Activated naive CD4-positive, alpha-beta T cell treated with anti-CD3 and anti-CD28 coated beads for 36 hours (primary cell): ENCODE measurements at regions of chr6 and their contacts with region 1.

Region 1: DNA sequence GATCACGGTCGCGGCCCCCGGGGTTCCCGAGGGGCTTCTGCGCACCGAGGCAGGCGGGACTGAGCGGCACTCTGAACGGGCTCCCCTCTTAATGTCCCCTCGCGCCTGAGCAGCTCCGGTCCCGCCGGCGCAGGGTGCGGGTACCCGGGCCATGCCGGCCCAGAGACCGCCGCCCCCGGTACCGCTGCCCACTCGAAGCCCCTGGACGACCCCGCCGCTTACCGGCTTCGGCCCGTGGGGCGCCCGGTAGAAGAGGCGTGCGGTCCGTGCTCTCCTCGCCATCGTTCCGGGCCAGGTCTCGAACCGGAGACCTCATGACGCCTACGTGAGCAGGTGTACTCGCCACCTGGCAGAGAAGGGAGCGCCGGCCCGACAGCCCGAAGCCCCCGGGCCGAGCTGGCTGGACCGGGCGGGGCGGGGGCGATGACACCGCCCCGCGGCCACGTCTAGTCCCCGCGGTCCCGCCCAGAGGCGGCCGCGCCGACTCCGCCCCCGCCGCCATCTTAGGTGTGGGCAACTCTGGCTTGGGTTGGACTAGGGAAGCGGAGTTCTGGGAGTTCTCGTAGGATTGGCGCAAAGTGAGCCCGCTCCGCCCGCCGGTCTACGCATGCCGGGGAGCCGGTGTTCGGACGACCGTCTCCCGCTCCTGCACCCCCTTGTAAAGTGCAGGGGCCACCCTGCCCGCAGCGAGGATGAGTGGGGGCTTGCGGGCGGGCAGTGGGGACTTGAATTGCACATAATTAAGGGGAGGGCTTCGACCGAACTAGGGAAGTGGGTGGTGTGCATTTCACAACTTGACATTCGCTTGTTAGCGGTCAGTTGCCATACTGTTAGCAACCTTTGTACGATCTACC is at the start of gene SLC17A5:
- DNase-seq: peak; percentile 92
- H3K4me3 Mint-ChIP-seq: peak within 1 kb of the TSS; percentile 97
- H3K27ac Mint-ChIP-seq: peak within 1 kb of the TSS; percentile 86
- H3K4me1 Mint-ChIP-seq: peaks cover 18% of the 10 kb centered on the region
- H3K27me3 Mint-ChIP-seq: no peaks in the 10 kb centered on the region
- total RNA-seq, gene SLC17A5: 1.7 to 2.0 TPM

Region 2: GRCh38 chr6:72048080-72048479 is 1605.7 kb before region 1 on chr6:
- CTCF ChIA-PET with region 1: no interaction called
- intact Hi-C with region 1: no loop called
- DNase-seq: no peak
- H3K4me3 Mint-ChIP-seq: no peak overlapping the region
- H3K27ac Mint-ChIP-seq: no peak overlapping the region
- H3K4me1 Mint-ChIP-seq: no peaks in the 10 kb centered on the region
- H3K27me3 Mint-ChIP-seq: no peaks in the 10 kb centered on the region

Region 3: DNA sequence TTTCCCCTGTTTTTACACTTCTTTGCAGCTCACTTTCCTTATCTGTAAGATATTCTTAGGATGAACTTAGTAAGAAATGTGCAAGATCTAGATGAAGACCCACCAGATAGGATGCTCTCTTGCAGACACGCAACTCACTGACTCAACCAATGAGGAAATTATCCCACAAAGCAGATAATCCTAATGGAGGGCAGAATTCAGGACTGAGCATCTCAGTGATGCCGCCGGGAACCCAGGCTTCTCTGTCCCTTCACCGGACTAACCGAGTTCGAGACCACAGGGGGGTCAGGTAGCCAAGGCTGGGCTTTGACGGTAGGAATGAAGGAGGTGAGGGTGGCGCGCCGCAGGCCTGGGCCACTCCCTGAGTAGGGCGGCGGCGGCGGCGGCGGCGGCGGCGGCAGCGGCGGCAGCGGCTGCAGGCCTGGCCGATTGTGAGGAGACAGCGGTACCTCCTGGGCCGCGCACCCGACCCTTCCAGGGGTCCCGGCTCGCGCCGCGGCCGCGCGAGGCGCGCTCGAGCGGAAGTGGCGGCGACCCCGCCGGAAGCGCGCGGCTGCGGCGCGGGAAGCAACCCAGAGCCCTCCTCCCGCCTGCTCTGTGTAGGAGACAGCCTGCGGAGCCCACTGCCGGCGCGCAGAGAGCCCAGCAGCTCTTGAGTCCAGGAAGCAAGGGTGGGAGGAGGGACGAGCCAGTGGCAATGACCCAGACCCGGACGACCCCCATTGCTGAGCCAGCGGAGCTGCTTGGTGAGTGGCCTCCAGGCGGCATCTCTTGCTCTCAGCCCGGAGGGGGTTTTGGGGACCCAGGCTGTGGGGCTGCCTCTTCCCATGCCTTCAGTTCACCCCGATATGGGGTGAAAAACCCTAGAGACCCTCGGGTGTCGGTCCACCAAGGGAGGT is 390.9 kb before region 1 on chr6 and contains the start of gene KHDC1:
- CTCF ChIA-PET with region 1: no interaction called
- intact Hi-C with region 1: loop called (anchors 1 kb)
- DNase-seq: peak; percentile 65
- H3K4me3 Mint-ChIP-seq: peak within 1 kb of the TSS; percentile 80
- H3K27ac Mint-ChIP-seq: peak within 1 kb of the TSS; percentile 56
- H3K4me1 Mint-ChIP-seq: peaks cover 30% of the 10 kb centered on the region
- H3K27me3 Mint-ChIP-seq: no peaks in the 10 kb centered on the region
- total RNA-seq, gene KHDC1: 1.1 to 1.6 TPM

Region 4: DNA sequence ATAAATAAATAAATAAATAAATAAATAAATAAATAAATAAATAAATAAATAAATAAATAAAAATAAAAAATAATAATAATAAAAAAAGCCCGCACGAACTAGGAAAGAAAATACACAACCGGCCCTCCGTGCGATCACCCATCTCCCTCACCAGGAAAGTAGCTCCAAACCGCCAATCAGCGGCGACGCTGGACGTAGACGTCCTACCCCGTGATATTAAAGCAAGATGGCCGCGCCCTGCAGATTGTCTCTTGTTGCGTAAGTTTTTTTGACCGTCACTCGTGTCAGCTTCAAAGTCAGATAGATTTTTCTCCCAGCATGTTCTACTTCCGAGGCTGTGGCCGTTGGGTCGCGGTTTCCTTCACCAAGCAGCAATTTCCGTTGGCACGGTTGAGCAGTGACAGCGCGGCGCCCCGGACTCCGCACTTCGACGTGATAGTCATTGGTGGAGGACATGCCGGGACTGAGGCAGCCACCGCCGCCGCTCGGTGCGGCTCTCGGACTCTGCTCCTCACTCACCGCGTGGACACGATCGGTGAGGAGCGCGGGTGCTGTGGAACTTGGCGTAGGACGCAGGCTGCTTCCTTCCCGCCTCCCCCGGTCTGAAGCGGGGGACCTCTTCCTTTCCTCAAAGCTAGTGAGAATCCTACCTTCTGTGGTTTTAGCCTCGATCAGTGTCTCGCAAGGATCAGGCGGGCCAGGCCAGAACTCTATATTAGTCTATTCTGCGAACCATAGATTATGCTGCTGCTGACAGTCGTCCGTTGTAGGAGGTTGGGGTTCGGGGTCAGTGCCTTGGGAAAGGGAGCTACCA is 192.1 kb before region 1 on chr6 and contains the start of gene MTO1:
- CTCF ChIA-PET with region 1: interaction called, 6 read pairs
- intact Hi-C with region 1: loop called (anchors 1 kb)
- DNase-seq: peak; percentile 92
- H3K4me3 Mint-ChIP-seq: peak within 1 kb of the TSS; percentile 94
- H3K27ac Mint-ChIP-seq: peak within 1 kb of the TSS; percentile 97
- H3K4me1 Mint-ChIP-seq: peaks cover 37% of the 10 kb centered on the region
- H3K27me3 Mint-ChIP-seq: no peaks in the 10 kb centered on the region
- total RNA-seq, gene MTO1: 38.7 to 47.1 TPM

Region 5: GRCh38 chr6:73580247-73581149 is 73.3 kb before region 1 on chr6:
- CTCF ChIA-PET with region 1: interaction called, 5 read pairs
- intact Hi-C with region 1: loop called (anchors 1 kb)
- DNase-seq: peak; percentile 90
- H3K4me3 Mint-ChIP-seq: peak overlapping the region; percentile 76
- H3K27ac Mint-ChIP-seq: peak overlapping the region; percentile 99
- H3K4me1 Mint-ChIP-seq: peaks cover 28% of the 10 kb centered on the region
- H3K27me3 Mint-ChIP-seq: no peaks in the 10 kb centered on the region

Region 6: GRCh38 chr6:73665686-73666319 is 12.0 kb after region 1 on chr6:
- CTCF ChIA-PET with region 1: no interaction called
- intact Hi-C with region 1: no loop called
- DNase-seq: no peak
- H3K4me3 Mint-ChIP-seq: no peak overlapping the region
- H3K27ac Mint-ChIP-seq: no peak overlapping the region
- H3K4me1 Mint-ChIP-seq: peaks cover 5% of the 10 kb centered on the region
- H3K27me3 Mint-ChIP-seq: peaks cover 11% of the 10 kb centered on the region

Region 7: GRCh38 chr6:73695619-73696421 is 42.0 kb after region 1 on chr6 and contains the start of gene CD109:
- CTCF ChIA-PET with region 1: interaction called, 5 read pairs
- intact Hi-C with region 1: loop called (anchors 1 kb)
- DNase-seq: peak; percentile 89
- H3K4me3 Mint-ChIP-seq: peak within 1 kb of the TSS; percentile 92
- H3K27ac Mint-ChIP-seq: peak within 1 kb of the TSS; percentile 96
- H3K4me1 Mint-ChIP-seq: peaks cover 44% of the 10 kb centered on the region
- H3K27me3 Mint-ChIP-seq: peaks cover 9% of the 10 kb centered on the region
- total RNA-seq, gene CD109: 6.7 to 7.6 TPM

Region 8: GRCh38 chr6:75243333-75244062 is 1589.7 kb after region 1 on chr6 and contains the start of gene COX7A2:
- CTCF ChIA-PET with region 1: no interaction called
- intact Hi-C with region 1: loop called (anchors 1 kb)
- DNase-seq: peak; percentile 92
- H3K4me3 Mint-ChIP-seq: peak within 1 kb of the TSS; percentile 98
- H3K27ac Mint-ChIP-seq: peak within 1 kb of the TSS; percentile 100
- H3K4me1 Mint-ChIP-seq: peaks cover 32% of the 10 kb centered on the region
- H3K27me3 Mint-ChIP-seq: peaks cover 12% of the 10 kb centered on the region
- total RNA-seq, gene COX7A2: 577 to 592 TPM